Lower leg skin (tissue), 4 donors: ENCODE measurements at regions of chr19 and their contacts with region 1.

Region 1: DNA sequence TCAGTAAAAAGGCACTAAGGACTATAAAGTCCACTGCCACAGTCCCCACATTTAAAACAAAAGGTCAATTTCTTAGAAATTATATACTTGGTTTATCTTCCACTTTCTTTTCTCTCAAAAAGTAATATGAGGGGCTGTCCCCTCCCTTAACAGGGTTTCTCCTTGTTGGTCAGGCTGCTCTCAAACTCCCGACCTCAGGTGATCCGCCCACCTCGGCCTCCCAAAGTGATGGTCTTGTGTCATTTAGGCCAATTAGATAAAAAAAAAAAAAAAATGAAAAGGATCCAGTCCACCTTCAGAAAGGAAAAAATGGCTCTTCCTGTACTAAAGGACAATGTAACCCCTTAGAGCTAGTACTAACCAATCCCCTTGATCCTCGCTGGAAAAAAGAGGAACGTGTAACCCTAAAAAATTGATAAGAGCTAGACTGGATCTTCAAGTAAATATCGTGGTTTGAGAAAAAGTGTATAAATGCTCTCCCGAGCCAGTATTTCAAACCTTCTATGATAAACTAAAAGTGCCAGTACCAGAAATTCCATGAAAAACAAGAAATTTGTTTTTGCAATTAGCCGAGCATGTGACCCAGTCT is 9.0 kb upstream of the CD70 start:
- DNase-seq: no peak
- H3K4me3 ChIP-seq: no peak overlapping the region
- CTCF ChIP-seq: no peak
- POLR2A ChIP-seq: no peak

Region 2: GRCh38 chr19:7883796-7884570 is 1284.0 kb after region 1 on chr19:
- intact Hi-C with region 1: loop called (anchors 5 kb)
- DNase-seq: no peak
- H3K4me3 ChIP-seq: no peak overlapping the region
- CTCF ChIP-seq: no peak
- POLR2A ChIP-seq: no peak